ENCODE measurements at regions of chr2 and their contacts with region 1.

Region 1: DNA sequence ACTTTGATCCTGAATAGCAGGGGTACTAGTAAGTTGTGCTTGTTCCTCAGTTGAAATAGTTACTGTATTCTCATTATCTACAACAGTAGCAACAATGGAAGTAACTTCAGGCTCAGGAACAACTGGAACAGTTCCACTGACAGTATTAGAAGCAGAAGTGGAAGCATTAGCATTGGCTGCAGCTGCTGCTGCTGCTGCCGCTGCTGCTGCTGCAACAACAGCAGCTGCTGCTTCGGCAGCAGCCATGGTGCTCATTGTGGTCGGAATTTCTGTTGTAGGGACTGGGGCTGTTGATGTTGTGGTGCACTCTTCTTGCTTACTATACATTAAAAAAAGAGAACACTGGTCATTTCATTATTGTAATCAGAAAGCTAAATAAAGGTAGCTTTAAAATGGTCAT is 40.8 kb downstream of the PRPF40A start:
- DNase-seq: no peak
- H3K4me3 Mint-ChIP-seq: no peak overlapping the region
- H3K27ac Mint-ChIP-seq: no peak overlapping the region
- H3K4me1 Mint-ChIP-seq: peaks cover 6% of the 10 kb centered on the region
- H3K27me3 Mint-ChIP-seq: no peaks in the 10 kb centered on the region

Region 2: DNA sequence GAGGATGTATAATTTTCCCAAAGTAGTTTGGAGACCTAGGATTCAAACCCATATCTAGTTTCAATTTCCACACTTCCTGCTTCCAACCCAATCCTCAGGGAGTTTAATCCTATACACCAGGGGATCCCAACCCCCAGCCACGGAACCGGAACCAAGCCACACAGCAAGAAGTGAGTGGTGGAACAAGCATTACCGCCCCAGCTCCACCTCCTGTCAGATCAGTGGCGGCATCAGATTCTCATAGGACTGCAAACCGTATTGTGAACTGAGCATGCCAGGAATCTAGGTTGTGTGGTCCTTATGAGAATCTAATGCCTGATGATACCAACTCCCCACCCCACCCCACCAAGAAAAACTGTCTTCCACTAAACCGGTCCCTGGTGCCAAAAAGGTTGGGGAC is 11.8 kb before region 1 on chr2:
- CTCF ChIA-PET with region 1: no interaction called
- intact Hi-C with region 1: loop called (anchors 2 kb)
- DNase-seq: no peak
- H3K4me3 Mint-ChIP-seq: no peak overlapping the region
- H3K27ac Mint-ChIP-seq: no peak overlapping the region
- H3K4me1 Mint-ChIP-seq: no peaks in the 10 kb centered on the region
- H3K27me3 Mint-ChIP-seq: no peaks in the 10 kb centered on the region